ENCODE measurements at regions of chr6 and their contacts with region 1.

Region 1: DNA sequence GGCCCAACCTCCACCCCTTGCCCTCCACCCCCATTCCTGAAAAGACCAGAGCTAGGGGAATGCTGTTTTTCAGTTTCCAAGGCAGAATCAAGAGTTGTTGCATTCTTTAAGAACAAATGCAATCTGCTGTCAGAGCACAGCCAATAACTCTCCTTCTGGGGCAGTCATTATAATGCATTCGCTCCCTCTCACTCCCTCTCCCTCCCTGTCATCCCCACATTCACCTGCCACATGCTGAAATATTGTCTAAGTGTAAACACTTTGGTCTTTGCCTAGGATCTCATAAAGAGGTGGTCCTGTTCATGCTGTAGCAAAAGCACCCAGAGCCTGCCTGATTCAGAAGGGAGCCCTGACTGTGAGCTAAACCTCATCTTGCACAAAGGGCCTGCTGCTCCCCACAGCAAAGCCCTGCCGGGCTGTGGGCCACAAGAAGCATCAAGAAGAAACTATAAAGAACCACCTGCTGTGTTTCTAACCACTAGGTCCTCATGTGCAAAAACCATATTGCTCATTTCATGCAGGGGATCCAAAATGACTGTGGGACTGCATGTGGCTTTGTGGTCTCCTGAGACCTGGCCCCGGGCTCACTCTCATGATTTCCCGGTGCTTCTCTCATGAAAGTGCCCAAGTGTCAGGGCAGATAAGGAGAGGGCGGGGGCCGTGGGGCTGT is 85.6 kb downstream of the GPR6 start:
- DNase-seq: no peak
- ATAC-seq: no peak
- H3K4me3 ChIP-seq: no peak overlapping the region
- H3K27ac ChIP-seq: no peak overlapping the region
- H3K4me1 ChIP-seq: no peaks in the 10 kb centered on the region
- H3K27me3 ChIP-seq: peaks cover 0 to 17% (median 0%) of the 10 kb centered on the region in 3 donors
- CTCF ChIP-seq: no peak

Region 2: DNA sequence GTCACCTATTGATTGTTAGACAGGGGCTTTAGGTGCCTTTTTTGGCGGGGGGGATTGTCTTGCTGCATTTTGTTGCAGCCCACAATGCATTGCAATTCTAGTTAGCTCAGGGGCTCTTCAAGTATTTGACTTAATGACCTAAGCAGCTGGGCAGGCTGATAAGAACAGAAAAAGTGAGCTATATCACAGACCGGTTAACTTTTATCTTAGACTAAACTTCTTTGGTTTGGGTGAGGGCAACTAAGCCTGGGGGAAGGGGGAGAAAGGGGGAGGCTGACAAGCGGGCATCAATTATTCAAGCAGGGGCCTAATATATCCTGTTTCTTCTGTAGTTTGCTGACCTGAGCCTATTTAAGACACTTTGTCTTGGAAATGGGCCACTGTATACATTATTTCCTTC is 151.6 kb before region 1 on chr6:
- intact Hi-C with region 1: no loop called
- DNase-seq: no peak
- ATAC-seq: no peak
- H3K4me3 ChIP-seq: no peak overlapping the region
- H3K27ac ChIP-seq: no peak overlapping the region
- H3K4me1 ChIP-seq: no peaks in the 10 kb centered on the region
- H3K27me3 ChIP-seq: no peaks in the 10 kb centered on the region
- CTCF ChIP-seq: no peak

Region 3: GRCh38 chr6:110366256-110366655 is 302.5 kb after region 1 on chr6:
- intact Hi-C with region 1: loop called in 1 of 2 experiments (anchors 10 kb)
- DNase-seq: no peak
- ATAC-seq: no peak
- H3K4me3 ChIP-seq: no peak overlapping the region
- H3K27ac ChIP-seq: no peak overlapping the region
- H3K4me1 ChIP-seq: no peaks in the 10 kb centered on the region
- H3K27me3 ChIP-seq: peaks cover 0 to 4% (median 0%) of the 10 kb centered on the region in 3 donors
- CTCF ChIP-seq: no peak

Measured in psoas muscle (tissue), 8 donors.